Sigmoid colon (tissue), 7 donors: ENCODE measurements at regions of chr1 and their contacts with region 1.

Region 1: DNA sequence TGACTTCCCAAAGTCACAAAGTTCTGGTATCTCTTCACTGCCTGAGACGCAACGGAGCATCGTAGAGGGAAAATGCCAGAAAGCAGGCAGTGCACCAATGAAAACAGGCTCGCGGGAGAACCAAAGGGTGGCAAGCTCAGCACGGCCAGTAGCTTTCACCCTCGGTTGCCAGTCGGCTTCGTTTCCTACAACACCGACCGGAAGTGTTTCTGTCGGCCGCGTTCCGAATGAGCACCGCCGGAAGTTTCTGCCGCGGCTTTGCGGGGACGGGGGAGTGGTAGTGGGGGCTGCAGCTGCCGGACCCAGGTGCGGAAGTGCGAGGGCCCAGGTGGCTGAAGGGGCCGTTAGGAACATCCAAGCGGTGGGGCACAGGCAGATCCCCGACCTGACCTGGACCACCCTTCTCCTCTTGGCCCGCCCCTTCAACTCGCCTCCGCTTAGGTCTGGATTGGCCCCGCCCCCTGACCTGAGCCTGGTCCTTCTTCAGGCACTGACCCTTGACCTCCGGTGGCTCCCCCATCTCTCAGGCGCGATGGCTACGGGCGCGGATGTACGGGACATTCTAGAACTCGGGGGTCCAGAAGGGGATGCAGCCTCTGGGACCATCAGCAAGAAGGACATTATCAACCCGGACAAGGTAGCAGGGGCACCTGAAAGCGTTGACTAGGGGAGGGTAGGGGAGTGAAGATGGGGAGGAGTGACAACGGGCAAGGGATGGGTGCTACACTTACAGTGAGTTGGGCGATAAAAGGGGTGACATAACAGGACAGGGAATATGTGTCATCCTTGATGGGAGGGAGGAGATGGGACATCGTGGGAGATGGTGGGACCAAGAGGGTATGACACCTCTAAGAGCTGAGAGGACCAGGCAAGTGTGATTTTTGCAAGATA is at the start of gene DMAP1:
- DNase-seq: peak; percentile 94
- H3K4me3 ChIP-seq: peak within 1 kb of the TSS; percentile 69 to 92 (median 78)
- H3K27ac ChIP-seq: peak within 1 kb of the TSS; percentile 76 to 84 (median 80)
- H3K4me1 ChIP-seq: peaks cover 0 to 33% (median 27%) of the 10 kb centered on the region in 4 donors
- H3K27me3 ChIP-seq: no peaks in the 10 kb centered on the region
- CTCF ChIP-seq: peak in 1 of 4 experiments; percentile 7
- EP300 ChIP-seq: no peak
- POLR2A ChIP-seq: no peak
- total RNA-seq, gene DMAP1: 32.3 to 67.0 (median 40.9) TPM

Region 2: DNA sequence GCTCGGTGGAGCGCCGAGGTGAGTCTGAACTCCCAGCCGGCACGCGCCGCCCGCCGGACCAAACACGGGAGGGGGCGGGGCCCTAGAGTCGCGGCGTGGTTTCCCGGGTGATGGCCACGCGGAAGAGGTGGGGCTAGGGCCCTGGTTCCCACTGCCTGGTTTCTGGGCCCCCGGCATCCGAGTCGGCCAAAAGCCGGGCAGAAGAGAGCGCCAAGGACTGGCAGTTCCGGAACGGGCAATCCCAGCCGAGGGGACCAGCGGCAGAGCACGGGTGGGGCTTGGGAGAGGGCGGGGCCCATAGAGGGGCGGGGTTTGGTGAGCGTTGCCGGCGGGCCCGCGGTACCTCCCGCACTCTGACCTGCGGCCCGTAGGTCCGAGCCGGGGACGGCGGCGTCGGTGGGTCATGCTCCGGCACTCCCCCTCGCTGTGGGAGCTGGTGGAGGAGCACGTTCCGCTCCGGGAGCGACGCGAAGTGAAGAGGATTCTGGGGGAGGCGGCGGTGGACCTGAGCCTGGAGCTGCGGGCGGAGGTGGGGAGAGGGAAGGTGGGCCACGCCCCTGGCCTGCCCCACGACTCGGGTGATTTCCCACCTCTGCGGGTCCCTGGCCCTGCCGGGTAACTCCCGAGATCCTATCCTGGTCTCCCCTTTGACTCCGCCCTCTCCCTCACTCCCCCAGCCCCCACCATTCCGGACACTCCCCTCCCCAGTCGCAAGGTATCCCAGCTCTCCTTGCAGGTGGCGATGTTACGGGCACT is 221.8 kb before region 1 on chr1 and contains the start of gene CCDC24:
- intact Hi-C with region 1: loop called (anchors 10 kb)
- DNase-seq: peak; percentile 93
- H3K4me3 ChIP-seq: peak within 1 kb of the TSS; percentile 47 to 77 (median 56)
- H3K27ac ChIP-seq: peak within 1 kb of the TSS; percentile 68 to 84 (median 79)
- H3K4me1 ChIP-seq: peaks cover 0 to 18% (median 14%) of the 10 kb centered on the region in 4 donors
- H3K27me3 ChIP-seq: no peaks in the 10 kb centered on the region
- CTCF ChIP-seq: no peak
- EP300 ChIP-seq: no peak
- POLR2A ChIP-seq: no peak
- total RNA-seq, gene CCDC24: 2.7 to 6.6 (median 3.9) TPM

Region 3: GRCh38 chr1:44103270-44104131 is 110.0 kb before region 1 on chr1:
- intact Hi-C with region 1: no loop called
- DNase-seq: no peak
- H3K4me3 ChIP-seq: no peak overlapping the region
- H3K27ac ChIP-seq: no peak overlapping the region
- H3K4me1 ChIP-seq: no peaks in the 10 kb centered on the region
- H3K27me3 ChIP-seq: no peaks in the 10 kb centered on the region
- CTCF ChIP-seq: no peak
- EP300 ChIP-seq: no peak
- POLR2A ChIP-seq: no peak

Region 4: GRCh38 chr1:44237721-44238457 is 24.4 kb after region 1 on chr1:
- intact Hi-C with region 1: loop called (anchors 1 kb)
- DNase-seq: peak; percentile 94
- H3K4me3 ChIP-seq: peak overlapping the region in 2 of 4 donors; percentile 8 to 16
- H3K27ac ChIP-seq: peak overlapping the region; percentile 75 to 93 (median 86)
- H3K4me1 ChIP-seq: peaks cover 0 to 51% (median 45%) of the 10 kb centered on the region in 4 donors
- H3K27me3 ChIP-seq: no peaks in the 10 kb centered on the region
- CTCF ChIP-seq: peak; percentile 68 to 81 (median 74)
- EP300 ChIP-seq: peak in 2 of 4 donors; percentile 68 to 76
- POLR2A ChIP-seq: no peak

Region 5: DNA sequence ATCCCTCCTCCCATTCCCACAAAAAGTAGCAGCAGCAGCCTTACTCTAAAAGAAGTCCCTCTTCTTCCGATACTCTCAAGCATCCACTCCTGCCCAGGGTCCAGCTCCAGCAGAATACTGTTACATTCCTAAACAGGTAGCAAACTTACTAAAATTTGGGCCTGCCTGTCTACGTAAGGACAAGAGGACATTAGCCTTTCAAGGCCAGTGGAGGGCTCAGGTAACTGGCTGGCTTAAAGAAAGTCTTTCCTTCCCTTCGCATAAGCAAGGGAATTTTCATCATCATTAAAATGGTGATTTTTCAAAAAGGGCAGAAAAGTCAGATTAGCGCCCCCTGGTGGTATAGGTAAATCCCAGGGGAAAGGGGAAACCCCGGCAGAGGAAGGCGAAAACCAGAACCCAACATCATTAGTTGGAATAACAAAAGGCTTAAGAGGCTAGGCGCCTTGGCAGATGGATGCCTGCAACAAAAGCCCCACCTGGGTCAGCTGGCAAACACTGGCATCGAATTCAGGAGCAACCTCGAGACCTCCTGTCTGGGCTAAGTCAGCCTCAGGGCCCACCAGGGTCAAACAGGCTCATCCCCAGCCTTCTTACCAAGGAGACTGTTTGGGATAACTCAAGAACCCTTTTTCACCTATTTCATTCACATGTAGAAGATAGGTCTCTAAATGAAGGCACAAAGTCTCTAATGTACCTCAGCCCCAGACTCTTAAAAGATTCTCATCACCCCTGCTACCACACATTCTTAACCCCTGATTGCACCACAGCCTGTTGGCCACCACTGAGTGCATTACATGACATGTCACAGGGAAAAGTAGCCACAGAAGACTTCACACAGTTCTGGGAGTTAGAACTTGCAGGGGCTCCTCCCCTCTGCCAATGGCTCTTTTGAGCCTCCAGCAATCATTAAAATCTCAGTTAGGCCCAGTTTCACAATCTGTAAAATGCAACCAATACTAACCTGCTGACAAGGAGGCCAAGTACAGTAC is 104.9 kb after region 1 on chr1:
- intact Hi-C with region 1: loop called (anchors 1 kb)
- DNase-seq: no peak
- H3K4me3 ChIP-seq: no peak overlapping the region
- H3K27ac ChIP-seq: no peak overlapping the region
- H3K4me1 ChIP-seq: no peaks in the 10 kb centered on the region
- H3K27me3 ChIP-seq: no peaks in the 10 kb centered on the region
- CTCF ChIP-seq: peak; percentile 30 to 83 (median 71)
- EP300 ChIP-seq: no peak
- POLR2A ChIP-seq: no peak

Region 6: GRCh38 chr1:44411861-44412260 is 198.4 kb after region 1 on chr1:
- intact Hi-C with region 1: loop called (anchors 5 kb)
- DNase-seq: no peak
- H3K4me3 ChIP-seq: no peak overlapping the region
- H3K27ac ChIP-seq: no peak overlapping the region
- H3K4me1 ChIP-seq: peaks cover 0 to 17% (median 14%) of the 10 kb centered on the region in 4 donors
- H3K27me3 ChIP-seq: peaks cover 50 to 100% (median 99%) of the 10 kb centered on the region in 3 donors
- CTCF ChIP-seq: no peak
- EP300 ChIP-seq: no peak
- POLR2A ChIP-seq: no peak

Region 7: DNA sequence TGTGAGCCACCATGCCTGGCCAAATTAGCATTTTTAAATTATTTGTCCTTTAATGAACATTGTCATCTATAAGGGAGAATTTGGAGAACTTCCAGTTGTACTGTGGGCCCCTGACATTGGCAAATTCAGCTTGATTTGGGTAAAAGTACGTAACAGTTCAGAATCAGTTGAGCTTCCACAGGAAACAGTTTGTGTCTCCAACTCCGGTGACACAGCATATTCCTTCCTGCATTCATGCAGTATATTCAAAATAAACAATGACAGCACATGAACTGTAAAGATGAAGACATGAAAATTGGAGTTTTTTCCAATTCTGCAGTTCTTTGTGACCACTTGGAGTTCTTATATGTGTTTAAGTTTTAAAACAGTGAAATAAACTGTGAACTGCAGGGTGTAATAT is 219.7 kb after region 1 on chr1:
- intact Hi-C with region 1: no loop called
- DNase-seq: no peak
- H3K4me3 ChIP-seq: no peak overlapping the region
- H3K27ac ChIP-seq: no peak overlapping the region
- H3K4me1 ChIP-seq: no peaks in the 10 kb centered on the region
- H3K27me3 ChIP-seq: peaks cover 0 to 13% (median 0%) of the 10 kb centered on the region in 3 donors
- CTCF ChIP-seq: no peak
- EP300 ChIP-seq: no peak
- POLR2A ChIP-seq: no peak

Region 8: GRCh38 chr1:44594871-44595746 is 381.6 kb after region 1 on chr1:
- intact Hi-C with region 1: loop called (anchors 2 kb)
- DNase-seq: peak; percentile 82
- H3K4me3 ChIP-seq: no peak overlapping the region
- H3K27ac ChIP-seq: no peak overlapping the region
- H3K4me1 ChIP-seq: no peaks in the 10 kb centered on the region
- H3K27me3 ChIP-seq: peaks cover 0 to 26% (median 0%) of the 10 kb centered on the region in 3 donors
- CTCF ChIP-seq: peak; percentile 83 to 95 (median 92)
- EP300 ChIP-seq: no peak
- POLR2A ChIP-seq: no peak

Region 9: DNA sequence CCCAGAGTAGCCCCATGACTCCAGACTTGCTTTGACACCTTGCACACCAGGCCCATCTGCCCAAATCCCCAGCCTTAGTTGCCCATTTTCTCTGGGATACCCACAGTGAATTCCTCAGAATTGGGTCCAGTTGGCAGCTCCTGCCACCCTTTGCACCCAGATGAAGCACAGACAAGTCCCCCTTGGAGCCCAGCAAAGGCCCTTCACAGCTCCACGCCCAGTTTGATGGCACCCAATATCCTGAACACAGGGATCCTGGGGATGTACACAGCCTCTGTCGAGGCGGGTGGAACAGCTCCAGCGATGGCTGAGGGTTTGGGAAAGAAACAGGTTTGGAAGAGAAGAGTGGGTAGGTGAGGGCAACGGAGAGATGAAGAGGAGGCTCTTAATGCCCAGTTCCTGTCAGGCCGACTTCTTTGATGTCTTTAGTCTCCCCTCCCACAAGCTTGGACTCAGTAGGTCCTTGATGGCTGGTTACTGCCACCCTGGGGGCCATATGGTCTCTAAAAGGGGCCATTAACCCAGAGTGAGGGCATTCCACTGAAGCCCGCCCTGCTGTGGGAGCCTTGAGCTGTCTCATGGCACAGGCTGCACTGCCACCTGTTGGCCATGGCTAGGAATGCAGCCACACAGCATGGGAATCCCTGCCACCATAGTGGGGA is 439.1 kb after region 1 on chr1:
- intact Hi-C with region 1: loop called (anchors 10 kb)
- DNase-seq: peak; percentile 87
- H3K4me3 ChIP-seq: no peak overlapping the region
- H3K27ac ChIP-seq: peak overlapping the region in 3 of 4 donors; percentile 18 to 34 (median 33)
- H3K4me1 ChIP-seq: peaks cover 0 to 16% (median 4%) of the 10 kb centered on the region in 4 donors
- H3K27me3 ChIP-seq: no peaks in the 10 kb centered on the region
- CTCF ChIP-seq: peak; percentile 92 to 98 (median 92)
- EP300 ChIP-seq: no peak
- POLR2A ChIP-seq: no peak